ENCODE measurements at regions of chr22 and their contacts with region 1.

Region 1: DNA sequence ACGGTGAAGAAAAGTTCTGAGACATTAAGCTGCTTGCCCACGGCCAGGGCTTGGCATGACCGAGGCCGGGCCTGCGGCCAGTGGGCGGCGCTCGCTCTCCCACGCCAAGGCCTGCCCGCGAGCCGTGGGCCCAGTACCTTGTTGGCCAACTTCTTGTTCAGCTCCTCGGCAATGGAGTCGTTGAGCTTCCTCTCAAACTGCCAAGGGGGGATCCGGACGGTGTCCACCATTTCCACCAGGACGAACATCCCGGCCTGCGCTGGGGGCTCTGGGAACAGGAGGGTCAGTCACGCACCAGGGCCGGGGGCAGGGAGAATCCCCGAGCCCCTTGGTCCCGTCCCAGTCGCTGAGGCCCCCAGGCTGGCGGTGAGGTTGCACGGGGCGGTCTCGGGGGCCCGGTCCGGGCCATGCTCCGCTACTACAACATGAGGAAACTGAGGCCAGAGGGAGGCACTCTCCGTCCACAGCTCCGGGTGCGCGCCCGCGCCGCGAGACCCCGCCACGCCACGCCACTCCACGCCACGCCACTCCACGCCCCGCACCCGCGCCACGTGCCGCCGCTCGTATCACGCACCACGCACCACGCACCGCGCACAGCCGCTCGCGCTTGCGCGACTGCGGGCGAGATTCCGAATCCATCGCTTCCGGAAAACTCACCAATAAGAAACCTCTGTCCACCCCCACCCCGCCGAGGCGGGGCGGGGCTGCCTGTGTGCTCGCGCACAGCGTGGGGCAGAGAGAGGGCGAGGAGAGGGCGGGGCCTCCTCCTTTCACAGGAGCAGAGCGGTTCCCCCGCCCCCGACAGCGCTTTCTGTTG is at the start of gene POLR3H:
- DNase-seq: peak; percentile 99
- H3K4me3 ChIP-seq: peak within 1 kb of the TSS; percentile 70 to 93 (median 76)
- H3K27ac ChIP-seq: peak within 1 kb of the TSS; percentile 89 to 93 (median 92)
- H3K4me1 ChIP-seq: peaks cover 20 to 54% (median 46%) of the 10 kb centered on the region in 4 donors
- H3K27me3 ChIP-seq: no peaks in the 10 kb centered on the region
- CTCF ChIP-seq: peak; percentile 63 to 72 (median 72)
- EP300 ChIP-seq: no peak
- POLR2A ChIP-seq: peak; percentile 40
- total RNA-seq, gene POLR3H: 20.9 to 28.2 (median 23.0) TPM

Region 2: DNA sequence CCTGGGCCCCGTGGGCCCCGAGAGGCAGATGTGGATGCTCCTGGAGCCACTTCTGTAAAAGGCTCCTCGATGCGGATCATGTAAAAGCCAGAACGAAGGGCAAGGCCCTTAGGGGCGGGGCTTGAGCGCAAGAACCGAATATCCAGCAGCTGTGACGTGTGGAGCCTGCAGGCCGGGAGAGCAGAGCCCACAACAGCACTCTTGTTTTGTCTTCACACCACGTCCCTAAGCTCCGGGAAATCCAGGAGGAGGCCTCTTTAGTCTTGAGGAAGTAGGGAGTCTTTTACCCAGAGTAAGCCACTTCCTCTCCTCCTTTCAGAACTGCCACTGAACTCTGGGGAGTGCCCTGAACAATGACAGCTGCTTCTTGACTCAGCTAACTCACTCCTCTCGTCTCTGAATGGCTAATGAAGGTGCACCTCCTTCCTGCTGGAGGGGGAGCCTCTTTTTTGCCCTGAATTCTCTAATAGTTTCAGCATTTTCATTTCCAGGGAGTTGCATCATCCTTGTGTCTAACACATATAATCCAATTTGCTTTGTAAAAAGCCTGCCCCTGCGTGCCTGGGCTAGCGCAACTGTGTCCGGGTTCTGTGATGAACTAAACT is 326.4 kb before region 1 on chr22:
- intact Hi-C with region 1: no loop called
- DNase-seq: peak; percentile 96
- H3K4me3 ChIP-seq: peak overlapping the region; percentile 24 to 37 (median 32)
- H3K27ac ChIP-seq: peak overlapping the region; percentile 83 to 86 (median 84)
- H3K4me1 ChIP-seq: peaks cover 20 to 33% (median 30%) of the 10 kb centered on the region in 4 donors
- H3K27me3 ChIP-seq: no peaks in the 10 kb centered on the region
- CTCF ChIP-seq: no peak
- EP300 ChIP-seq: no peak
- POLR2A ChIP-seq: no peak

Region 3: GRCh38 chr22:41526837-41527799 is 16.9 kb before region 1 on chr22:
- intact Hi-C with region 1: no loop called
- DNase-seq: no peak
- H3K4me3 ChIP-seq: no peak overlapping the region
- H3K27ac ChIP-seq: peak overlapping the region; percentile 90 to 93 (median 92)
- H3K4me1 ChIP-seq: peaks cover 49 to 54% (median 51%) of the 10 kb centered on the region in 4 donors
- H3K27me3 ChIP-seq: no peaks in the 10 kb centered on the region
- CTCF ChIP-seq: peak; percentile 90
- EP300 ChIP-seq: no peak
- POLR2A ChIP-seq: no peak

Region 4: DNA sequence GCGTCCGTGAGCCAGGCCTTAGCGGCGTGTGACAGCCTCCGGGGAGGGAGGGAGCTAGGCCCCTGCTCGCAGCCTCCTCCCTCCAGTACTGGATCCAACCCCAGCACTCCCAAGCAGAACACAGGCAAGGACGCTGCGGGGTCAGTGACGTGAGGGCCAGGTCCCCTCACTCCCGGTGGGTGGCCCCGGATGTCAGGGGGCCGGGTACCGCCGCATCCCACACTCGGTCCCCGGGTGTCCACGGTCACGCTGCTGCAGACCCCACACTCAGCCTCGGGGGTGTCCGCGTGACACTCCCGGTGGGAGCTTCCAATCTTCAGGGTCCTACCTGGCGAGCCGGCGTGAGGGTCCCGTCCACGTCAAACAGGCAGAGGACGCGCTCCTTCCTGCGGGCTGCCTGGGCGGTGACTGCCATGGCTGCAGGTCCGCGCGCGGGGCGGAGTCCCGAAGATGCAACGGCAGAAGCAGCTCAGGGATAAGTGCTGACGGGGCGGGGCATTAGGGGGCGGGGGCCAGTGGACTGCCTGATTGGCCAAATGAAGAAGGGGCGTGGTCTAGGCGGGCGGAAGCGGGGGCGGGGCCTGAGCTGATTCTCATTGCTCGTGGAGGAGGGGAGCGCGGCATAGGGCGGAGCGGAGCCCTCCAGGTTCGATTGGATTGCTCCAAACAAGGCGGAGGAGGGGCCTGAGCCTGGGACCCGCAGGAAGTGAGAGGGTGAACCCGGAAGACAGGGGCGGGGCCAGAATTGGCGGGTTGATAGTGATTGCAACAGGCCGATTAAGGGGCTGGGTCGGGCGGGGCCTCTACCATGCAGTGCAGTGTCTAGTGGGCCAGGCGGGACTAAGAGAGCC is 45.6 kb after region 1 on chr22 and contains the start of gene PMM1:
- intact Hi-C with region 1: loop called (anchors 5 kb)
- DNase-seq: peak; percentile 100
- H3K4me3 ChIP-seq: peak within 1 kb of the TSS; percentile 87 to 97 (median 90)
- H3K27ac ChIP-seq: peak within 1 kb of the TSS; percentile 83 to 87 (median 86)
- H3K4me1 ChIP-seq: peaks cover 14 to 28% (median 25%) of the 10 kb centered on the region in 4 donors
- H3K27me3 ChIP-seq: no peaks in the 10 kb centered on the region
- CTCF ChIP-seq: peak in 1 of 3 experiments; percentile 4
- EP300 ChIP-seq: no peak
- POLR2A ChIP-seq: peak; percentile 83
- total RNA-seq, gene PMM1: 37.4 to 54.2 (median 39.3) TPM

Region 5: GRCh38 chr22:41621099-41621910 is 77.2 kb after region 1 on chr22 and contains the start of gene XRCC6:
- intact Hi-C with region 1: loop called (anchors 2 kb)
- DNase-seq: peak; percentile 100
- H3K4me3 ChIP-seq: peak within 1 kb of the TSS; percentile 73 to 98 (median 94)
- H3K27ac ChIP-seq: peak within 1 kb of the TSS; percentile 95 to 99 (median 98)
- H3K4me1 ChIP-seq: peaks cover 25 to 71% (median 47%) of the 10 kb centered on the region in 4 donors
- H3K27me3 ChIP-seq: no peaks in the 10 kb centered on the region
- CTCF ChIP-seq: peak in 1 of 3 experiments; percentile 2
- EP300 ChIP-seq: peak; percentile 50
- POLR2A ChIP-seq: peak; percentile 89
- total RNA-seq, gene XRCC6: 181 to 255 (median 233) TPM

Measured in esophagus muscularis mucosa (tissue), 4 donors.